ENCODE measurements at regions of chr2 and their contacts with region 1.

Region 1: DNA sequence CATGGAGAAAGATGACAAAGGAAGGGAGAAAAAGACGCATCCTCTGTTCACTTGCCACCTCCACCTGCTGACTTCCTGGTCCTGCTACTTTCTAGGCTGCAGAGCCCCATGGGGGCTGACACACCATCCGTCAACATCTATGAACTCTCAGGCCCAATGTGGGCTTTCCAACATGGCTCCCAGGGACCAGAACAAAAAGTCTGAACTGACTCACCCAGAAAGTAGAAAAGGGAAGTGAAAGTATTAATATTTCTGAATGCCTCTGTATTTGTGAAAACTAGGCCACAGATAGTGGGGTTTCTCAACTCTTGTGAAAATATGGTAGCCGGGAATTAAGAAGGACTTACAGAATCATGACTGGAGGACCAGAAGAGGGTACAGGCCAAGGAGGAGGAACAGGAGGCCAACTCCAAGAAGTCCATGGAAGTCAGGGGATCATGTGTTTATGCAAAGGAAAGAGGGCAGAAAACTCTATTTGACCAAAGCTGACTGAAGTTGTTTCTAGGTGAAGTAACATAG is 123.1 kb upstream of the CAB39 start:
- DNase-seq: peak; percentile 84
- ATAC-seq: peak; percentile 98
- H3K4me3 ChIP-seq: peak overlapping the region in 1 of 5 experiments; percentile 11
- H3K4me3 Mint-ChIP-seq: peak overlapping the region; percentile 63
- H3K27ac ChIP-seq: peak overlapping the region; percentile 64 to 74
- H3K27ac Mint-ChIP-seq: peak overlapping the region; percentile 95
- H3K4me1 ChIP-seq: peaks cover 55 to 57% of the 10 kb centered on the region in 2 donors
- H3K4me1 Mint-ChIP-seq: peaks cover 79% of the 10 kb centered on the region
- H3K27me3 ChIP-seq: no peaks in the 10 kb centered on the region
- H3K27me3 Mint-ChIP-seq: no peaks in the 10 kb centered on the region
- CTCF ChIP-seq: no peak

Region 2: GRCh38 chr2:230537531-230537976 is 52.0 kb before region 1 on chr2:
- CTCF ChIA-PET with region 1: no interaction called
- POLR2A ChIA-PET with region 1: no interaction called
- intact Hi-C with region 1: loop called (anchors 10 kb)
- DNase-seq: peak; percentile 43
- ATAC-seq: peak; percentile 79
- H3K4me3 ChIP-seq: no peak overlapping the region
- H3K4me3 Mint-ChIP-seq: peak overlapping the region; percentile 75
- H3K27ac ChIP-seq: peak overlapping the region in 1 of 2 donors; percentile 53
- H3K27ac Mint-ChIP-seq: peak overlapping the region; percentile 87
- H3K4me1 ChIP-seq: peaks cover 19 to 23% of the 10 kb centered on the region in 2 donors
- H3K4me1 Mint-ChIP-seq: peaks cover 49% of the 10 kb centered on the region
- H3K27me3 ChIP-seq: no peaks in the 10 kb centered on the region
- H3K27me3 Mint-ChIP-seq: no peaks in the 10 kb centered on the region
- CTCF ChIP-seq: no peak

Region 3: DNA sequence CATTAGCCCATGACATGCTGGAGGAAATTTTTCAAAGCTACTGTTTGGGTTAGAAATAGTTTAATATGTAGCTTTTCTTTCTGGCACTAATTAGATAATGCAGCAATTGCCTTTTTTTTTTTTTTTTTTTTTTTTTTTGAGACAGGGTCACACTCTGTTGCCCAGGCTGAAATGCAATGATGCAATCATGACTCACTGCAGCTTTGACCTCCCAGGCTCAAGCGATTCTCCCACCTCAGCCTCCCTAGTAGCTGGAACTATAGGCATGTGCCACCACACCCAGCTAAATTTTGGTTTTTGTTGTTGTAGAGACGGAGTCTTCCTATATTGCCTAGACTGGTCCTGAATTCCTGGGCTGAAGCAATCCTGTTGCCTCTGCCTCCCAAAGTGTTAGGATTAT is 37.4 kb before region 1 on chr2:
- CTCF ChIA-PET with region 1: no interaction called
- POLR2A ChIA-PET with region 1: no interaction called
- intact Hi-C with region 1: no loop called
- DNase-seq: no peak
- ATAC-seq: no peak
- H3K4me3 ChIP-seq: no peak overlapping the region
- H3K4me3 Mint-ChIP-seq: no peak overlapping the region
- H3K27ac ChIP-seq: no peak overlapping the region
- H3K27ac Mint-ChIP-seq: peak overlapping the region; percentile 41
- H3K4me1 ChIP-seq: peaks cover 12% of the 10 kb centered on the region in 2 donors
- H3K4me1 Mint-ChIP-seq: peaks cover 24% of the 10 kb centered on the region
- H3K27me3 ChIP-seq: no peaks in the 10 kb centered on the region
- H3K27me3 Mint-ChIP-seq: no peaks in the 10 kb centered on the region
- CTCF ChIP-seq: no peak

Region 4: GRCh38 chr2:230564805-230565779 is 24.5 kb before region 1 on chr2:
- CTCF ChIA-PET with region 1: no interaction called
- POLR2A ChIA-PET with region 1: no interaction called
- intact Hi-C with region 1: loop called (anchors 1 kb)
- DNase-seq: peak; percentile 81
- ATAC-seq: peak; percentile 86
- H3K4me3 ChIP-seq: peak overlapping the region in 3 of 5 experiments; percentile 19 to 48 (median 34)
- H3K4me3 Mint-ChIP-seq: peak overlapping the region; percentile 52
- H3K27ac ChIP-seq: peak overlapping the region; percentile 63 to 65
- H3K27ac Mint-ChIP-seq: peak overlapping the region; percentile 57
- H3K4me1 ChIP-seq: peaks cover 14 to 23% of the 10 kb centered on the region in 2 donors
- H3K4me1 Mint-ChIP-seq: peaks cover 25% of the 10 kb centered on the region
- H3K27me3 ChIP-seq: no peaks in the 10 kb centered on the region
- H3K27me3 Mint-ChIP-seq: no peaks in the 10 kb centered on the region
- CTCF ChIP-seq: no peak

Region 5: DNA sequence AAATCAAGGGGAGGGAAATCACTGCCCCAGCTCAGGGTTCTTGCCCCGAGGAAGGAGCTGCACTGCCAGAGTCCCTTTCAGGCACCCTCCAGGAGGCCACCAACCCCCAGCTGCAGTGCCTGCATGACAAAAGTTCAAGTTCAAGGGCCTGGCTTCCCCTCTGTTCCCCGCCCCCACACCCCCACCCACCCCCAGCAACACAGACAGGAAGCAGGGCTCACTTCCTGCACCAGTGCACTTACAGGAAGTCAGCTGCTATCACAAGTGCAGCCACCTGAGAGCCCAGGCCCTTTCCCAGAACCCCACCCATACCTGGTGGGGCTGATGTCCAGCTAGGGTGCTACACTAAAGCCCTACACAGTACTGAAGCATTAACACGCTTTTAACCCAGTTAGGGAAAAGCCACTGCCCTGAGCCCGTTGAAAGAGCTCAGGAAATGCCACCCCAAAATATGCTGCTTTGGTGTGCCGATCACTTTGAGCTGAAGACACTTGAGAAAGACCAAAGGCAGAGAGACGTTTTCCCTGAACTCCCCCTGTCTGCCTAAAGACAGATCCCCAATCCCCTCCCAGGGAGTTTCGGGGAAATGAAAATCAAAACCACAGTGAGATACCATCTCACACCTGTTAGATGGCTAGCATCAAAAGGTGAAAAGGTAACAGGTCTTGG is 13.1 kb after region 1 on chr2:
- CTCF ChIA-PET with region 1: interaction called, 17 read pairs
- POLR2A ChIA-PET with region 1: interaction called, 34 read pairs
- intact Hi-C with region 1: loop called (anchors 1 kb)
- DNase-seq: peak; percentile 83
- ATAC-seq: peak; percentile 84
- H3K4me3 ChIP-seq: peak overlapping the region in 3 of 5 experiments; percentile 9 to 31 (median 19)
- H3K4me3 Mint-ChIP-seq: peak overlapping the region; percentile 78
- H3K27ac ChIP-seq: peak overlapping the region; percentile 99
- H3K27ac Mint-ChIP-seq: peak overlapping the region; percentile 99
- H3K4me1 ChIP-seq: peaks cover 72% of the 10 kb centered on the region in 2 donors
- H3K4me1 Mint-ChIP-seq: peaks cover 83% of the 10 kb centered on the region
- H3K27me3 ChIP-seq: no peaks in the 10 kb centered on the region
- H3K27me3 Mint-ChIP-seq: no peaks in the 10 kb centered on the region
- CTCF ChIP-seq: no peak

Region 6: GRCh38 chr2:231099918-231100317 is 510.4 kb after region 1 on chr2:
- CTCF ChIA-PET with region 1: no interaction called
- POLR2A ChIA-PET with region 1: no interaction called
- intact Hi-C with region 1: no loop called
- DNase-seq: no peak
- ATAC-seq: no peak
- H3K4me3 ChIP-seq: no peak overlapping the region
- H3K4me3 Mint-ChIP-seq: no peak overlapping the region
- H3K27ac ChIP-seq: no peak overlapping the region
- H3K27ac Mint-ChIP-seq: no peak overlapping the region
- H3K4me1 ChIP-seq: no peaks in the 10 kb centered on the region
- H3K4me1 Mint-ChIP-seq: no peaks in the 10 kb centered on the region
- H3K27me3 ChIP-seq: no peaks in the 10 kb centered on the region
- H3K27me3 Mint-ChIP-seq: no peaks in the 10 kb centered on the region
- CTCF ChIP-seq: no peak

Measured in B cell (primary cell).